PC-9 (cell line): ENCODE measurements at regions of chr4 and their contacts with region 1.

Region 1: DNA sequence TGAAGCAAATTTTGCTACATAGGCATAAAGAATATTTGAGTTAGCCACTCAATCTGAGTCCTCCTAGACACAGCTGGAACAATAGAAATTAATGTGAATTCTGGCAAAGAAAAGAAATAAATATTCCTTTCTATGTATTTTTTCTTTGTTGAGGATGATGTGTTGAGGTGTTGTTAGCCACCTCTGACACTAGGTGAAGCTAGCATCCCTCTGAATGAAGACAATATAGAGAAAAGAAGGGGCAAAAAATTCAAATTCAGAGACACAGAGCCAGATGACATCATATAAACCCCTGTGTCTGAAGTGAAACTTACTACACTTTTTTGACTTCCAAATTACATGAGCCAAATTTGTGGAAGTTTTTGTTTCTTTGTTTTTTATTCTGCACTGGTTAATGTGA is 34.6 kb upstream of the TMPRSS11D start:
- DNase-seq: no peak
- H3K4me3 ChIP-seq: no peak overlapping the region
- H3K27ac ChIP-seq: no peak overlapping the region
- H3K4me1 ChIP-seq: no peaks in the 10 kb centered on the region
- H3K27me3 ChIP-seq: no peaks in the 10 kb centered on the region
- CTCF ChIP-seq: peak; percentile 60

Region 2: DNA sequence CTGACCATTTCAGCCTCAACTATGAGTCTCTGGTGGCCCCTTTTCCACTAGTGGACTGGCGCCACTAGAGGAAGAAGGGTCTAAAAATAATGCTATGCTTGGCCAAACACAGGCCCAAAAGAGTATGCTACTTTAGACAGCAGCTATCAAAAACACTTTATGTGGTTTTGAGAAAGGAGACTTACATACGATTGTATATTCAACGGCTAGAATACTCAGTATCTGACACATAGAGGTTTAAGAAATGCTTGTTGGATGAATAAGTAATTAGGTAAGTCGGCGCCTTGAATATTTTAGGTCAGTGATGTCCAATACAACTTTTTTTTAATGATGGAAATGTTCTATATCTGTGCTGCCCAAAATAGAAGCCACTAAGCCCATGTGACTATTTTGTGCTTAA is 70.6 kb after region 1 on chr4:
- CTCF ChIA-PET with region 1: no interaction called
- POLR2A ChIA-PET with region 1: no interaction called
- intact Hi-C with region 1: loop called (anchors 1 kb)
- DNase-seq: no peak
- H3K4me3 ChIP-seq: no peak overlapping the region
- H3K27ac ChIP-seq: no peak overlapping the region
- H3K4me1 ChIP-seq: no peaks in the 10 kb centered on the region
- H3K27me3 ChIP-seq: no peaks in the 10 kb centered on the region
- CTCF ChIP-seq: no peak